Activated CD4-positive, alpha-beta T cell treated with anti-CD3 and anti-CD28 coated beads for 36 hours (primary cell): ENCODE measurements at regions of chr11 and their contacts with region 1.

Region 1: GRCh38 chr11:33257897-33258630 is 883 bp downstream of the HIPK3 start:
- DNase-seq: peak; percentile 86
- ATAC-seq: peak; percentile 62
- H3K4me3 Mint-ChIP-seq: peak overlapping the region; percentile 96
- H3K27ac Mint-ChIP-seq: peak overlapping the region; percentile 92
- H3K4me1 Mint-ChIP-seq: peaks cover 34% of the 10 kb centered on the region
- H3K27me3 Mint-ChIP-seq: no peaks in the 10 kb centered on the region

Region 2: GRCh38 chr11:32583459-32584271 is 674.4 kb before region 1 on chr11 and contains the start of gene EIF3M:
- CTCF ChIA-PET with region 1: no interaction called
- POLR2A ChIA-PET with region 1: no interaction called
- intact Hi-C with region 1: loop called (anchors 2 to 5 kb)
- DNase-seq: peak; percentile 98
- ATAC-seq: peak; percentile 99
- H3K4me3 Mint-ChIP-seq: peak within 1 kb of the TSS; percentile 87
- H3K27ac Mint-ChIP-seq: peak within 1 kb of the TSS; percentile 96
- H3K4me1 Mint-ChIP-seq: peaks cover 39% of the 10 kb centered on the region
- H3K27me3 Mint-ChIP-seq: no peaks in the 10 kb centered on the region
- total RNA-seq, gene EIF3M: 392 to 408 TPM

Region 3: GRCh38 chr11:32893343-32894148 is 364.5 kb before region 1 on chr11:
- CTCF ChIA-PET with region 1: no interaction called
- POLR2A ChIA-PET with region 1: no interaction called
- intact Hi-C with region 1: loop called in 1 of 2 experiments (anchors 1 kb)
- DNase-seq: peak; percentile 77
- ATAC-seq: peak; percentile 45
- H3K4me3 Mint-ChIP-seq: peak overlapping the region; percentile 97
- H3K27ac Mint-ChIP-seq: peak overlapping the region; percentile 98
- H3K4me1 Mint-ChIP-seq: peaks cover 38% of the 10 kb centered on the region
- H3K27me3 Mint-ChIP-seq: no peaks in the 10 kb centered on the region

Region 4: GRCh38 chr11:33039274-33040032 is 218.6 kb before region 1 on chr11 and contains the start of gene TCP11L1:
- CTCF ChIA-PET with region 1: no interaction called
- POLR2A ChIA-PET with region 1: no interaction called
- intact Hi-C with region 1: loop called in 1 of 2 experiments (anchors 1 kb)
- DNase-seq: peak; percentile 89
- ATAC-seq: peak; percentile 71
- H3K4me3 Mint-ChIP-seq: peak within 1 kb of the TSS; percentile 87
- H3K27ac Mint-ChIP-seq: peak within 1 kb of the TSS; percentile 95
- H3K4me1 Mint-ChIP-seq: peaks cover 37% of the 10 kb centered on the region
- H3K27me3 Mint-ChIP-seq: peaks cover 5% of the 10 kb centered on the region
- total RNA-seq, gene TCP11L1: 7.9 to 8.8 TPM

Region 5: DNA sequence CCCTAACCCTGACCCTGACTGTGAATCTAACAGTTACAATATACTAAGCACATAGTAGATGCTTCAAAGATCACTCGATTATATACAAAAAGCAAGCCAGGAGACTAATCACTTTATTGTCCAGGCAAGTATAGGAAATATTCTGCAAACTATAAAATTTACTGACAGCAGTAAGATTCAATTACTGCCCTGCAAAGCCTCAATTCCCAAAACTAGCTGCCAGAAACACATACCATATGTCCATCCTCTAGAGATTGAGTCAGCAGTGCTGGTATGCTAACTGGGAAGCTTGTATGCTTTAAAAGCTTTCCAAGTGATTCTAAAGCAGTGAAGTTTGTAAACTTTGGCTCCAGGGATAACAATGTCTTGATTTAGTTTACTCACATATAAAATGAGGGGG is 122.8 kb before region 1 on chr11:
- CTCF ChIA-PET with region 1: no interaction called
- POLR2A ChIA-PET with region 1: no interaction called
- intact Hi-C with region 1: no loop called
- DNase-seq: no peak
- ATAC-seq: no peak
- H3K4me3 Mint-ChIP-seq: no peak overlapping the region
- H3K27ac Mint-ChIP-seq: no peak overlapping the region
- H3K4me1 Mint-ChIP-seq: peaks cover 2% of the 10 kb centered on the region
- H3K27me3 Mint-ChIP-seq: no peaks in the 10 kb centered on the region

Region 6: DNA sequence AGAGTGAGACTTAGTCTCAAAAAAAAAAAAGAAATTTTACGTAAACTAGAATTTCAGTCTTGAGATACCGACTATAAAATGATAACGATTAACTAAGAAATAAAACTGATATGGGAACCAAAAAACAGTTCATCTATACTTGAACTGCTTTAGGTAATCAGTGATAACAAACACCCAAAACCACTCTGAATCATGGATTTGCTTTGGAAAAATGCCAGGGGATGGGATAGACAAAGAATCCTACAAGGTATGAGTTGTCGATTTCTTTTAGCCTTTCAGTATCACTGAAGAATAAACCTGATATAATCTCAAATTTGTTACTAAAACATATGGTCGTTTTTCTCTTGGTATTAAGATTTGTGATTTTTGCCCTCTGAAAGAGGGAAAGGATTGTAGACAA is 110.5 kb before region 1 on chr11:
- CTCF ChIA-PET with region 1: no interaction called
- POLR2A ChIA-PET with region 1: no interaction called
- intact Hi-C with region 1: no loop called
- DNase-seq: no peak
- ATAC-seq: no peak
- H3K4me3 Mint-ChIP-seq: no peak overlapping the region
- H3K27ac Mint-ChIP-seq: no peak overlapping the region
- H3K4me1 Mint-ChIP-seq: peaks cover 15% of the 10 kb centered on the region
- H3K27me3 Mint-ChIP-seq: no peaks in the 10 kb centered on the region

Region 7: DNA sequence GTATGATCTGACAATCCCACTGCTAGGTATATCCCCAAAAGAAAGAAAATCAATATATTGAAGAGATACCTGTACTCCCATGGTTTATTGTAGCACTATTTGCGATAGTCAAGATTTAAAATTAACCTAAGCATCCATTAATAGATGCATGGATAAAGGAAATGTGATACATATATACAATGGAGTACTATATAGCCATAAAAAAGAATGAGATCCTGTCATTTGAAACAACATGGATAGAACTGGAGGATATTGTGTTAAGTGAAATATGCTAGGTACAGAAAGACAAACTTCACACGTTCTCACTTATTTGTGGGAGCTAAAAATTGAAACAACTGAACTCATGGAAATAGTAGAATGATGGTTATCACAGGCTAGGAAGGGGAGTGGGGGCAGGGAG is 15.5 kb before region 1 on chr11:
- CTCF ChIA-PET with region 1: no interaction called
- POLR2A ChIA-PET with region 1: no interaction called
- intact Hi-C with region 1: no loop called
- DNase-seq: no peak
- ATAC-seq: no peak
- H3K4me3 Mint-ChIP-seq: no peak overlapping the region
- H3K27ac Mint-ChIP-seq: no peak overlapping the region
- H3K4me1 Mint-ChIP-seq: no peaks in the 10 kb centered on the region
- H3K27me3 Mint-ChIP-seq: peaks cover 6% of the 10 kb centered on the region

Region 8: GRCh38 chr11:33329705-33330329 is 71.8 kb after region 1 on chr11:
- CTCF ChIA-PET with region 1: interaction called, 4 read pairs
- POLR2A ChIA-PET with region 1: no interaction called
- intact Hi-C with region 1: loop called (anchors 2 kb)
- DNase-seq: peak; percentile 57
- ATAC-seq: peak; percentile 78
- H3K4me3 Mint-ChIP-seq: no peak overlapping the region
- H3K27ac Mint-ChIP-seq: no peak overlapping the region
- H3K4me1 Mint-ChIP-seq: peaks cover 12% of the 10 kb centered on the region
- H3K27me3 Mint-ChIP-seq: no peaks in the 10 kb centered on the region

Region 9: DNA sequence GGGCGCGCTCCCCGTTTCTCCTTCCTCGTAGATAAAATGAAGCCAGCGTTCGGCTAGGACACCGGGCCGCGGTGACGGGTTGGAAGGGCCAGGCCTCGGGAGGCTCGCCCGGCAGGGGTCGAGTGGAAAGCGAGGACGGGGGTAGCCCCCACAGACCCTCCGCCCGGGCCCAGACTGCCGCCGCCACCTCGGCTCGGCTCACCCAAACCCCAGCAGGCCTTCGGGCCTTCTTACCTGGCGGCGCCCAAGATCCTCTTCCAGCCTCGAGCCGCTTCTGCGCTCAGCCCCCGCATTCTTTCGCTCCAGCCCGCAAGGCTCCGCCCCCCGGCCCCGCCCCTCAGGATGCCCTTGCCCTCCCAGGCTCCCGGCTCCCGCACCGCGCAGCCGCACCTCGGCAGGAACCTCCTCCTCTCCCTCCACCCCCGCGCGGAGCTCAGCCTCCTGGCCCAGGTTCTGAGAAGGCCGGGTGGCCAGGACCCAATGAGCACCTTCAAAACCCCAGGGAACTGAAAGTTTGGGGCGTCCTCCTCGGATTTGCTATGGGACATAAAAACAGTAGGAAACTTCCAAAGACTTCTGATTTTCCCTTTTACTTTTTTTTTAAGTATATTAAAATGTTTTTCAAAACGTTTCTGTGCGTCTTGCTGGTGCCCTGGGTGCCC is 478.2 kb after region 1 on chr11 and contains the start of gene CD59:
- CTCF ChIA-PET with region 1: no interaction called
- POLR2A ChIA-PET with region 1: no interaction called
- intact Hi-C with region 1: loop called (anchors 5 to 10 kb)
- DNase-seq: peak; percentile 95
- ATAC-seq: peak; percentile 74
- H3K4me3 Mint-ChIP-seq: peak within 1 kb of the TSS; percentile 82
- H3K27ac Mint-ChIP-seq: peak within 1 kb of the TSS; percentile 84
- H3K4me1 Mint-ChIP-seq: peaks cover 44% of the 10 kb centered on the region
- H3K27me3 Mint-ChIP-seq: peaks cover 16% of the 10 kb centered on the region
- total RNA-seq, gene CD59: 58.2 to 60.0 TPM

Region 10: DNA sequence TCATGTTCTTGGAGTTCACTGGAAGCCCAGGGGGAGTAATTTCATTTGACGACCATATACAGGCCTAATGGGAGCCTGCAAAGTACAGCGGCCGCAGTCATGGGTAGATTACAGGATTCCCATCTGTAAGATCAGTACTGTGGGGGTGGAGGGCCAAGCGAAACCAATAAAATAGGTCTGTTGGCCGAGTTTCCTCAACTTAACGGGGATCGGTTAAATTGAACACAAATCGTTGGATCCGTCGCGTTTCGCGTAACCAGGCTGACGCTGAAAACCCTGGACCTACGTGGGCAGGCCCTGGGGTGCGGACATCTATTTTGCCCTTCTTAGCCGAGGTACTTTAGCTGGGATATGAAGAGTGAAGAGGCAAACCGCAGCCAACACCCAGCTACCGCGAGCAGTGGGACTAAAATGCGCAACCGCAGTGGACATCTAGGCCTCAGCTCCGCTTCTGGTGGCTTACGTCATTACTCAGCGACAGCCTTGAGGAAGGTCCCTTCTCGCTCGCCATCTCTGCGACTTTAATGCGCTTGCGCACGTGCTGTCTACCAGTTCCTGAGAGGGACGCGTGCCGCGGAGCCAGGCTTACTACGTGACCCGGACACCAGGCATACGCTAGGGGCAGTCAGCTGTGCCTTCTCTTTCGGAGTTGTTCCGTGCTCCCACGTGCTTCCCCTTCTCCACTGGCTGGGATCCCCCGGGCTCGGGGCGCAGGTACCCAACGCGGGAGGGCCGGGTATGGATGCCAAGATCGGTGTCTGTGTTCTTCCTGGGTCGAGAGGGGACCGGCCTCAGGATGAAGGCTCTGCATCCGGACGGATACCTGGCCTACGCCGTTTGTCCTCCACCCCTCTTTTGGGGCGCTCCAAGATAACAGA is 847.3 kb after region 1 on chr11 and contains the start of gene NAT10:
- CTCF ChIA-PET with region 1: no interaction called
- POLR2A ChIA-PET with region 1: interaction called, 4 read pairs
- intact Hi-C with region 1: loop called in 1 of 2 experiments (anchors 5 kb)
- DNase-seq: peak; percentile 98
- ATAC-seq: peak; percentile 93
- H3K4me3 Mint-ChIP-seq: peak within 1 kb of the TSS; percentile 97
- H3K27ac Mint-ChIP-seq: peak within 1 kb of the TSS; percentile 99
- H3K4me1 Mint-ChIP-seq: peaks cover 57% of the 10 kb centered on the region
- H3K27me3 Mint-ChIP-seq: no peaks in the 10 kb centered on the region
- total RNA-seq, gene NAT10: 142 to 147 TPM